ENCODE measurements at regions of chr18 and their contacts with region 1.

Region 1: GRCh38 chr18:50281295-50281971 is at the start of gene MBD1:
- DNase-seq: peak; percentile 93 to 99 (median 97)
- ATAC-seq: peak; percentile 92
- H3K4me3 ChIP-seq: peak within 1 kb of the TSS; percentile 80 to 90
- H3K4me3 Mint-ChIP-seq: peak within 1 kb of the TSS; percentile 98
- H3K27ac ChIP-seq: peak within 1 kb of the TSS; percentile 81 to 90
- H3K27ac Mint-ChIP-seq: peak within 1 kb of the TSS; percentile 96
- H3K4me1 ChIP-seq: peaks cover 38% of the 10 kb centered on the region
- H3K4me1 Mint-ChIP-seq: peaks cover 49% of the 10 kb centered on the region
- H3K27me3 ChIP-seq: no peaks in the 10 kb centered on the region
- H3K27me3 Mint-ChIP-seq: no peaks in the 10 kb centered on the region
- CTCF ChIP-seq: no peak
- total RNA-seq, gene MBD1: 88.5 to 96.0 TPM

Region 2: GRCh38 chr18:49813319-49814146 is 467.9 kb before region 1 on chr18 and contains the start of gene ACAA2:
- CTCF ChIA-PET with region 1: no interaction called
- POLR2A ChIA-PET with region 1: no interaction called
- intact Hi-C with region 1: loop called in 1 of 2 experiments (anchors 5 kb)
- DNase-seq: peak; percentile 53 to 91 (median 77)
- ATAC-seq: peak; percentile 81
- H3K4me3 ChIP-seq: peak within 1 kb of the TSS; percentile 88 to 93
- H3K4me3 Mint-ChIP-seq: peak within 1 kb of the TSS; percentile 97
- H3K27ac ChIP-seq: peak within 1 kb of the TSS; percentile 90 to 95
- H3K27ac Mint-ChIP-seq: peak within 1 kb of the TSS; percentile 95
- H3K4me1 ChIP-seq: peaks cover 37% of the 10 kb centered on the region
- H3K4me1 Mint-ChIP-seq: peaks cover 62% of the 10 kb centered on the region
- H3K27me3 ChIP-seq: no peaks in the 10 kb centered on the region
- H3K27me3 Mint-ChIP-seq: no peaks in the 10 kb centered on the region
- CTCF ChIP-seq: no peak
- total RNA-seq, gene ACAA2: 9.5 to 10.0 TPM

Region 3: DNA sequence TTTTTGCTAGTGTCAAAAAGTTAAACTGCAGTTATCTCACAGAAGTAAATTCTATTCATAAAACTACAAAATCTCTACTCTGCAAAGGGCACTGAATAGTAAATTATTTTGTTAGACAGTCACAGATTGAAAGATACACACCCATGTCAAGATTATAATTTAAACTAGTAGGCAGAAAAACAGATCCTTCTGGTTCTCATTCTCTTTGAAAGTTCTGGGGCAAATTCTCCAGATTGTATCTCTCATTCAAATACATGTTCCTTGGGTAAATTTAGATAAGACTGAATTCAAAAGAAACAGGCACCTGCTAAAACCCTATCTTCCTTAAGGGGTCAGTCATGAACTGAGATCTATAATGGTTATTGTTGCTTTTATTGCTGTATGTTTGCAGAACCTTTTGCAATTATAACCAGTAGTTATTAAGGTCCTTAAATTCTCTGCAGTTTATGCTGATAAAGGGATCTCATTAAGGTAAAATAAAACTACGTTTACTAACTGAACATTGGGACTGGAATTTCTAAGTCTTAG is 170.1 kb before region 1 on chr18:
- CTCF ChIA-PET with region 1: no interaction called
- POLR2A ChIA-PET with region 1: no interaction called
- intact Hi-C with region 1: no loop called
- DNase-seq: no peak
- ATAC-seq: no peak
- H3K4me3 ChIP-seq: no peak overlapping the region
- H3K4me3 Mint-ChIP-seq: no peak overlapping the region
- H3K27ac ChIP-seq: no peak overlapping the region
- H3K27ac Mint-ChIP-seq: no peak overlapping the region
- H3K4me1 ChIP-seq: no peaks in the 10 kb centered on the region
- H3K4me1 Mint-ChIP-seq: no peaks in the 10 kb centered on the region
- H3K27me3 ChIP-seq: no peaks in the 10 kb centered on the region
- H3K27me3 Mint-ChIP-seq: peaks cover 27% of the 10 kb centered on the region
- CTCF ChIP-seq: no peak

Region 4: DNA sequence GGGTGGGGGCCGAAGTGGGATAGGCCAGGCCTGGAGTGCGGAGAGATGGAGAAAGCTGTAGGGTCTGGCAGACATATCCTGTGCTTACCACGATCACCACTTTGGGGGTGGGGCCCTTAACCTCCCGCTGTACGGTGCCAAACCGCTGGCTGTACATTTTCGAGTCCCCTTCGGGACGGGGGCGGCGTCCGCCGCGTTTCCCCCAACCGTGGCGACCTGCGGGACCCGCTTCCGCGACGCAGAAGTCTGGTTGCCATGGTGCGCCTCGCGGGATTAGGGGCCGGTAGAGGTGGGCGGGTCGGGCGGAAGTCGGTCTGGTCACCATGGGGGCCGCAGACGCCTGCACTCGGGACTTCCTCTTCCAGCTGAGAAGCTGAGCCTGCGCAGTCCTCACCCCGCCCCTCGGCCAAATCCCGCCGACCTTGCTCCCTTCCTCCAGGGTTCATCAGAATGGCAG is 15.2 kb before region 1 on chr18 and contains the start of gene CFAP53:
- CTCF ChIA-PET with region 1: interaction called, 11 read pairs
- POLR2A ChIA-PET with region 1: interaction called, 18 read pairs
- intact Hi-C with region 1: loop called (anchors 1 kb)
- DNase-seq: peak; percentile 58 to 93 (median 86)
- ATAC-seq: peak; percentile 83
- H3K4me3 ChIP-seq: peak within 1 kb of the TSS; percentile 38 to 67
- H3K4me3 Mint-ChIP-seq: peak within 1 kb of the TSS; percentile 88
- H3K27ac ChIP-seq: peak within 1 kb of the TSS; percentile 43 to 85
- H3K27ac Mint-ChIP-seq: peak within 1 kb of the TSS; percentile 85
- H3K4me1 ChIP-seq: peaks cover 18% of the 10 kb centered on the region
- H3K4me1 Mint-ChIP-seq: peaks cover 24% of the 10 kb centered on the region
- H3K27me3 ChIP-seq: no peaks in the 10 kb centered on the region
- H3K27me3 Mint-ChIP-seq: no peaks in the 10 kb centered on the region
- CTCF ChIP-seq: no peak
- total RNA-seq, gene CFAP53: 0.22 to 0.36 TPM

Region 5: DNA sequence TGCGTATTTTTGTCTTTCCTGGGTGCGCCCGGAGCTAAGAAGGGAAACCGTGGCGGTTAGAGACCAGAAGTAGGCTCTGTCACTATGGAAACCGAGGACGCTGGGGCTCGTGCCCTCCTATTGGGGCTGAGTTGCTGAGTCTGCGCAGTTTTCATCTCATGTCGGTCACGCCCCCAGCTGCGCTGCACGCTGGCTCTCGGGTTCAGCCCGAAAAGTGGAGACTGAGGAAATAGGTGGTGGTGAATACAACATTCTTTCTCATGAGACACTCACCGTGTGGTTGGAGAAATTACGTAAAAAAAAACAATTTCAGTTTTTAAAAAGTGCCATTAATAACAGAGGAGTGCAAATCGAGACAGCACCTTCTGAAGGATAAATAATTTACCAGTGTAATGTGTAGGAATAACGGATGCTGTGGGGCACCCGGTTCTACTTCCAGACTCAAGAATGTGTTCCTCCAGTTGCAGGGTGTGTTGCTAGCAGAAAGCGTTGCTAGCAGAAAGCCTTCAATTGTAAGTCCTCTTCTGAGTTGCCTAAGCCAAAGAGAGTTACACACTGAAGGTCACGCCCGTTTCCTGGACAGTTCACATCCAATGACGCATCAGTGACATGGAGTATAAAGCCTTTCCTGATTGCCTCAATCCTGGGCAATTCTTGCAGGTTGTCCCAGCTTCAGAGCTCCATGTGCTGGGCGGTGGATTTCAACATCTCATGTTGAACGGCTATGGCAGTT is 26.5 kb after region 1 on chr18:
- CTCF ChIA-PET with region 1: interaction called, 3 read pairs
- POLR2A ChIA-PET with region 1: interaction called, 16 read pairs
- intact Hi-C with region 1: loop called in 1 of 2 experiments (anchors 1 kb)
- DNase-seq: peak; percentile 75 to 96 (median 91)
- ATAC-seq: peak; percentile 99
- H3K4me3 ChIP-seq: peak overlapping the region; percentile 52 to 59
- H3K4me3 Mint-ChIP-seq: peak overlapping the region; percentile 96
- H3K27ac ChIP-seq: peak overlapping the region; percentile 24 to 41
- H3K27ac Mint-ChIP-seq: peak overlapping the region; percentile 63
- H3K4me1 ChIP-seq: peaks cover 6% of the 10 kb centered on the region
- H3K4me1 Mint-ChIP-seq: peaks cover 20% of the 10 kb centered on the region
- H3K27me3 ChIP-seq: peaks cover 0 to 4% of the 10 kb centered on the region in 2 experiments
- H3K27me3 Mint-ChIP-seq: peaks cover 12% of the 10 kb centered on the region
- CTCF ChIP-seq: no peak

Measured in CD8-positive, alpha-beta T cell (primary cell).